Caco-2 (cell line): ENCODE measurements at regions of chr6 and their contacts with region 1.

Region 1: GRCh38 chr6:87407901-87408720 is at the start of gene CFAP206:
- DNase-seq: peak; percentile 81 to 84
- H3K4me3 ChIP-seq: peak within 1 kb of the TSS; percentile 96
- H3K4me3 Mint-ChIP-seq: peak within 1 kb of the TSS; percentile 76
- H3K27ac Mint-ChIP-seq: peak within 1 kb of the TSS; percentile 82
- H3K4me1 ChIP-seq: peaks cover 7% of the 10 kb centered on the region; the same call in 1 of the 2 replicates
- H3K4me1 Mint-ChIP-seq: no peaks in the 10 kb centered on the region
- H3K27me3 ChIP-seq: no peaks in the 10 kb centered on the region
- H3K27me3 Mint-ChIP-seq: peaks cover 5% of the 10 kb centered on the region
- CTCF ChIP-seq: peak in 1 of 2 experiments; percentile 18
- total RNA-seq, gene CFAP206: 0.23 TPM in 1 of 2 replicates, not detected in the other

Region 2: GRCh38 chr6:87472525-87473418 is 64.7 kb after region 1 on chr6 and contains the start of gene SLC35A1:
- CTCF ChIA-PET with region 1: no interaction called
- POLR2A ChIA-PET with region 1: no interaction called
- intact Hi-C with region 1: loop called (anchors 5 kb)
- DNase-seq: peak; percentile 73 to 86
- H3K4me3 ChIP-seq: peak within 1 kb of the TSS; percentile 84
- H3K4me3 Mint-ChIP-seq: peak within 1 kb of the TSS; percentile 84
- H3K27ac Mint-ChIP-seq: peak within 1 kb of the TSS; percentile 93
- H3K4me1 ChIP-seq: no peaks in the 10 kb centered on the region
- H3K4me1 Mint-ChIP-seq: no peaks in the 10 kb centered on the region
- H3K27me3 ChIP-seq: no peaks in the 10 kb centered on the region
- H3K27me3 Mint-ChIP-seq: peaks cover 2% of the 10 kb centered on the region
- CTCF ChIP-seq: peak; percentile 14 to 25
- total RNA-seq, gene SLC35A1: 12.3 and 12.7 TPM in 2 replicates